GM13976 (cell line): ENCODE measurements at regions of chr4 and their contacts with region 1.

Region 1: GRCh38 chr4:87679449-87680169 is 29.5 kb downstream of the DMP1 start:
- DNase-seq: peak; percentile 34
- CTCF ChIP-seq: no peak

Region 2: DNA sequence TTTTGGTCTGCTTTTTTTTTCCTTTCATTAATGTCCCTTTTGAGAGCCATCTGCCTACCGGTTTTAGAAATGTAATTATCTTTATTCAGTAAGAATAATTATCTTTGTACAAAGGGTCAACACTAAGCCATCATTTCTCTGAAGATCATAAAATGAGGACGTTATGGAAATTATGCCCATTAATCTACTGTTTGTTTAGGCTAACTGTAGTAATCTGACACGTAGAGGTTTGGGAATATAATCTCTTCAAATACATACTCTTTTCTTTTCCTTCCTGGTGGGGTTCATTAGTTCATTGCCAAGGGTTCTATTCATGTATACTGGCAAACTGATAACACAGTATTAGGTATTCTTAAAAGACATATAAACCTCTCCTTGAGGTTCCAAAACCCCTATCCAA is 353.1 kb before region 1 on chr4:
- in situ Hi-C with region 1: loop called (anchors 25 kb)
- DNase-seq: no peak
- CTCF ChIP-seq: no peak

Region 3: GRCh38 chr4:87938746-87939145 is 259.1 kb after region 1 on chr4:
- in situ Hi-C with region 1: no loop called
- DNase-seq: no peak
- CTCF ChIP-seq: no peak